ENCODE measurements at regions of chr12 and their contacts with region 1.

Region 1: GRCh38 chr12:119681961-119682638 is 14.2 kb downstream of the PRKAB1 start:
- DNase-seq: peak in 1 of 4 experiments; percentile 12
- ATAC-seq: peak; percentile 17
- H3K4me3 ChIP-seq: no peak overlapping the region
- H3K27ac ChIP-seq: peak overlapping the region; percentile 4; the same call in 1 of the 3 replicates
- H3K4me1 ChIP-seq: no peaks in the 10 kb centered on the region; a peak in 3 of 5 replicates
- H3K27me3 ChIP-seq: no peaks in the 10 kb centered on the region
- CTCF ChIP-seq: no peak
- EP300 ChIP-seq: no peak
- POLR2A ChIP-seq: peak; percentile 49
- RAD21 ChIP-seq: no peak

Region 2: DNA sequence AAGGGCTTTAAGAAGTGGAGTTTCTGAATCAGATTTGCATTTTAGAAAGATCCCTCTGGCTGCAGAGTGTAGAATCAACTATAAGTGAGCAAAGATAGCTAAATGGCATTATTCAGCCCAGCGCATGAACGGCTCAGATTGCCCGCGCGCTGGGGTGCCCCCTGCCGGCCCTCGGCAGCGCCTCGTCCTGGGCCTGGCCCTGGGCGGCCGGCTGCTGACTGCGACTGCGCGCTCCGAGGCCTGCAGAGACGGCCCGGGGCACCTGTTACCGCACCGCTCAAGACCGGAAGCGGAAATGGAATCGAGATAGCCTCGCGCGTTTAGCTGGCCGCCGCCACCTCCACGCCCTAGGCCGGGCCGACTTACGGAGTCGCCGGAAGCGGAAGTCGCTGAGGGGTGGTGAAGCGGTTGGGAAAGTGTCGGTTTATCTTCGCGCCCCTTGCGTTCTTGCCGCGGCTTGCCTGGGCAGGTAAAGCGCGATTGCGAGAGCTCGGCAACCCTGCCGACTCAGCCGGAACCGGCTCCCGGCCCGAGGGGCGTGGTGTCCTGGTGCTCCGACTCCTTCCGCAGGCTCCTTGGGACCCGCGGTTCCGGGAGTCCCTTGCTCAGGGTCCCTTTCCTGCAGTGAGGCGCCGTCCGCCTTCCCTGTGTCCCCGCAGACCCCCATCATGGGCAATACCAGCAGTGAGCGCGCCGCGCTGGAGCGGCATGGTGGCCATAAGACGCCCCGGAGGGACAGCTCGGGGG is 14.3 kb before region 1 on chr12 and contains the start of gene PRKAB1:
- CTCF ChIA-PET with region 1: no interaction called
- POLR2A ChIA-PET with region 1: interaction called, 44 read pairs
- in situ Hi-C with region 1: no loop called
- intact Hi-C with region 1: no loop called
- DNase-seq: peak; percentile 94 to 99 (median 94)
- ATAC-seq: peak; percentile 91
- H3K4me3 ChIP-seq: peak within 1 kb of the TSS; percentile 81
- H3K27ac ChIP-seq: peak within 1 kb of the TSS; percentile 97
- H3K4me1 ChIP-seq: peaks cover 22 to 59% of the 10 kb centered on the region in 2 experiments
- H3K27me3 ChIP-seq: no peaks in the 10 kb centered on the region
- CTCF ChIP-seq: peak; percentile 87 to 94 (median 93)
- EP300 ChIP-seq: peak; percentile 78
- POLR2A ChIP-seq: peak; percentile 92
- RAD21 ChIP-seq: peak; percentile 61 to 73
- polyA plus RNA-seq, gene PRKAB1: 32.6 to 38.2 TPM

Region 3: DNA sequence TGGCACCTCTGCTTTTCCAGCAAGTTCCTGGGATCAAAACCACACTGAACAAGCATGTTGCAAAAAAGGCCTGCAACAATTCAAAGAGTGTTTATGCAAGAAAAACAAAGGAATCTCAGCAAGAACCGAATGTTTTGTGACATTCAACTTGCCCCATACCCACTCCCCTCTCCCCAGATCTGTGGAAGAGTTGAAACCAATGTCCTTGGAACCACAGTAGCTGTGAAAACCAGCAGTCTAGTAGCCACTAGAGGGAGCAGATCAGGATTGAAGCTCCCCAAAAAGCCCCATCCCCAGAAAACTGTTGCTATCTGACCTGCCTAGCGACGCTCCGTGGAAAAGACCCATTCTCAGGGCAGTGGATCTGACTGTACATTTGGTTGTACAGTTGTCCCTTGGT is 12.9 kb after region 1 on chr12:
- CTCF ChIA-PET with region 1: no interaction called
- POLR2A ChIA-PET with region 1: interaction called, 16 read pairs
- in situ Hi-C with region 1: no loop called
- intact Hi-C with region 1: no loop called
- DNase-seq: peak; percentile 31 to 37 (median 34)
- ATAC-seq: peak; percentile 80
- H3K4me3 ChIP-seq: no peak overlapping the region
- H3K27ac ChIP-seq: no peak overlapping the region
- H3K4me1 ChIP-seq: peaks cover 0 to 2% of the 10 kb centered on the region in 2 experiments; a peak in 1 of 5 replicates
- H3K27me3 ChIP-seq: no peaks in the 10 kb centered on the region
- CTCF ChIP-seq: peak; percentile 39 to 62 (median 58)
- EP300 ChIP-seq: no peak
- POLR2A ChIP-seq: no peak
- RAD21 ChIP-seq: 0 out of 4 replicates have a peak, but pooled peaks of 1 of the 2 experiments have one; percentile 21

Region 4: DNA sequence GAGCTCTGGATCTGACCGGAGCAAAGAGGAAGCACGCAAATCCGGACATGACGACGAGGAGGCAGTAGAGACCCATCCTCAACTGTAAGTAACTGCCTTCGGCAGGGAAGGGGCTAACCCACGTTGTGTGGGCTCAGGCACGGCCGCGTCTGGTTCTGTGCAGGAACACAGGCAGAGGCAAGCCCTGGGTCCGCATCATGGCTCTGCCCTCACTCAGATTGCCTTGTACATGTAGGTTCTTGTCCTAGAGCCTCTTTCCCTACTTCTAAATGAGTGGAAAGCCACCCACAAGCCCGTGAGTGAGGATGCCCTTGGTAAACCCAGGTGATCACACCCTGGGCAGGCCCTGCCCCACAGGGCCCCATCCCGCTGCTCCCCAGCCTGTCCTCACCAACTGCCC is 527.8 kb after region 1 on chr12:
- CTCF ChIA-PET with region 1: no interaction called
- POLR2A ChIA-PET with region 1: no interaction called
- in situ Hi-C with region 1: no loop called
- intact Hi-C with region 1: no loop called
- DNase-seq: no peak
- ATAC-seq: no peak
- H3K4me3 ChIP-seq: no peak overlapping the region
- H3K27ac ChIP-seq: no peak overlapping the region
- H3K4me1 ChIP-seq: peaks cover under 1 to 14% of the 10 kb centered on the region in 2 experiments; a peak in 3 of 5 replicates
- H3K27me3 ChIP-seq: no peaks in the 10 kb centered on the region
- CTCF ChIP-seq: no peak
- EP300 ChIP-seq: no peak
- POLR2A ChIP-seq: no peak
- RAD21 ChIP-seq: no peak